PC-9 (cell line): ENCODE measurements at regions of chr5 and their contacts with region 1.

Region 1: DNA sequence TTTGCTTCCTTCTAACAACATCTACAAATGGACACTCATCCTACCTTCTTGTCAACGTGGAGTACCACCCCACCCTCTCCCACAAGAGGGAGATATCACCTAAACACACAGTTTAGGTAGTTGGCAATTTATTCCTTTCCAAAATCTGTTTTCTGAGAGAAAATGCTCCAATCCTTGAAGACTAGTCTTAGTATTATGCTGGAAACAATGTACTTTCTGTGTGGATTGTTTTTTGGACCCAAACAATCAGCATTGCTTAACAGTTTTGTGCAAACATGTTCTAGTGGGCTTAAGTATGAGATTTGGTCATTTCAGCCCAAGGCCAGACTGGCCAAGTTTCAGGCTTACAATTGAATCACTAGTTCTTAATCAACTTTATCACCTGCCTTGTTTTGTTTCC is 359.1 kb downstream of the ARHGEF28 start:
- DNase-seq: peak; percentile 25 to 46
- H3K4me3 ChIP-seq: no peak overlapping the region
- H3K27ac ChIP-seq: no peak overlapping the region; the same call in 1 of the 2 replicates
- H3K4me1 ChIP-seq: no peaks in the 10 kb centered on the region; the same call in 1 of the 2 replicates
- H3K27me3 ChIP-seq: no peaks in the 10 kb centered on the region
- CTCF ChIP-seq: peak; percentile 73

Region 2: GRCh38 chr5:73902327-73903051 is 82.7 kb before region 1 on chr5:
- CTCF ChIA-PET with region 1: no interaction called
- POLR2A ChIA-PET with region 1: no interaction called
- intact Hi-C with region 1: loop called (anchors 10 kb)
- DNase-seq: no peak
- H3K4me3 ChIP-seq: no peak overlapping the region
- H3K27ac ChIP-seq: peak overlapping the region; percentile 89
- H3K4me1 ChIP-seq: peaks cover 44% of the 10 kb centered on the region
- H3K27me3 ChIP-seq: no peaks in the 10 kb centered on the region
- CTCF ChIP-seq: peak; percentile 92

Region 3: DNA sequence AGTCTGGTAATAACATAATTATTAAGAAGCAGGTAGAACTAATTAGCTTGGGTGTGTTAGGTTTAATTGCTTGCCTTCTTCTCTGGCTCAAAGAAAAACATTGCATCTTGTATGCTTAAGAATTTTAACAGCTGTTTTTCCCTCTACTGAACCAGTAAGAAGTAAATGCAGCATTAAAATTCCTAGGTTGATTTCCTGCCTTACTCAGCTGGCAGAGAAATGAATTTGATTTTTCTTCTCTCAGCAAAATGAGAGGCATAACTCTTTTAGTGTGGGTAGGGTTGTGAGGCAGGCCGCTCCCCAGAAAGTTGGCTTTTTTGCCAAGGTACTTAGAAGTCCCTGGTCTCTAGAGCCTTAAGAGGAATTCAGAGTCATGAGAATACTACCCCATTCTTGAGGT is 56.7 kb before region 1 on chr5:
- CTCF ChIA-PET with region 1: no interaction called
- POLR2A ChIA-PET with region 1: no interaction called
- intact Hi-C with region 1: no loop called
- DNase-seq: no peak
- H3K4me3 ChIP-seq: no peak overlapping the region
- H3K27ac ChIP-seq: no peak overlapping the region
- H3K4me1 ChIP-seq: no peaks in the 10 kb centered on the region
- H3K27me3 ChIP-seq: no peaks in the 10 kb centered on the region
- CTCF ChIP-seq: no peak

Region 4: GRCh38 chr5:74044936-74045335 is 59.8 kb after region 1 on chr5:
- CTCF ChIA-PET with region 1: no interaction called
- POLR2A ChIA-PET with region 1: interaction called, 10 read pairs
- intact Hi-C with region 1: no loop called
- DNase-seq: no peak
- H3K4me3 ChIP-seq: no peak overlapping the region
- H3K27ac ChIP-seq: no peak overlapping the region
- H3K4me1 ChIP-seq: no peaks in the 10 kb centered on the region; the same call in 1 of the 2 replicates
- H3K27me3 ChIP-seq: no peaks in the 10 kb centered on the region
- CTCF ChIP-seq: no peak